ENCODE measurements at regions of chr12 and their contacts with region 1.

Region 1: DNA sequence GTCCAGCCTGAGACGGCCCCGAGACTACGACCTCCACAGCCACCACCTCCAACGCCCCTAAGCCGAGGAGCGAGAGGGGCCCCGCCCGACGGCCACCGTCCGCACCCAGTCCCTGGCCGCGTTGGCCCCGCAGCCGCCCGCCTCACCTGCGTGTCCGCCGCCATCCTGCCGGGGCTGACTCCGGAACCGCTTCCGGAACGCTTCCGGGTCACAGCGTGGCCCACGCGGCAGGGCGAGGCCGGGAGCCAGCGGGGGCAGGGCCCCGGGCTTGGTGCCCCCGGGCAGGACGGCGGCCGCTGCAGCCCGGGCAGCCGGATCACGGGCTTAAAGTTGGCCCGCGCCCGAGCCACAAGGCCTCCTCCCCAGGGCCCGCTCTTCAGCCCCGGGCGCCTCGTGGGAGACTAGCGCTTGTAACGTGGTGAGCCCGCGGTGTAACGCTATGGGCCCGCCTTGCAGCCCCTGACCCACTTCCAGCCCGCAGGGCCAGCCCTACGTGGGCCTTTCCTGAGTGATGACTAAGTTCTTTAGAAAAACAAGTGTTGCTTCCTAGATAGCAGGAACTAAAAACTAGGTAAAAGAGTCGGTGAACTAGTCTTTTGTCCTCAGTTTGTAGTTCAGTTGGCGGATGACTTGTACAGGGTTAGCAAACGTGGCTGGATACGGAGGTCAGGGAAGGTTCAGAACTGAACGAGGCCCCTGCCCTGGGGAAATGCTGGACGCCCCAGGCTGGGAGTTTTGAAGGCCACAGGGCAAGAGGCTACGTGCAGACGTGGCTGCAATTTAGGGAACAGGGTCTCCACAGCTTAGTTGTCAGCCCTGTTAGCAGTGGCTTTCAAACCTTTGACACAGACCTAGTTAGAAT is at the start of gene GCN1:
- DNase-seq: peak; percentile 85 to 88 (median 86)
- ATAC-seq: peak; percentile 79
- H3K4me3 ChIP-seq: peak within 1 kb of the TSS; percentile 98
- H3K27ac ChIP-seq: peak within 1 kb of the TSS; percentile 96
- H3K4me1 ChIP-seq: peaks cover 12 to 38% of the 10 kb centered on the region in 2 experiments; a peak in 4 of 5 replicates
- H3K27me3 ChIP-seq: no peaks in the 10 kb centered on the region
- CTCF ChIP-seq: no peak
- EP300 ChIP-seq: no peak
- POLR2A ChIP-seq: peak; percentile 77
- RAD21 ChIP-seq: no peak
- polyA plus RNA-seq, gene GCN1: 11.9 to 18.2 TPM

Region 2: DNA sequence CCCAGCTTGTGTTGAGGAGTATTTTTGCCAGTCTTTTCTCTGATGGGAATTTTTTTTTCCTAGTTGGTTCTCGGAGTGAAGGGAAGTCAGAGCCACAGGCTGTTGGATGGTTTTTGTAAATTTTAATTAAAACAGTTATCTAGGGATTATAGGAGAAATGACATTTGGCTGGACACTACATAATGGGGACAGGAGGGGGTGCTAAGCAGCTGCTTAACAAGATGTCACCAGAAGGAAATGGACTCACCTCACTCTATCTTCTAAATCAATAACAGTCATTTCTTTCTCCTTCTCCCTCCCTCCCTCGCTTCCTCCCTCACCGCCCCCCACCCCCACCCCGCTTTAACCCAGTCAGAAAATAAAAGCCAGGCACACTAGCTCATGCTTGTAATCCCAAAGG is 694.6 kb before region 1 on chr12:
- CTCF ChIA-PET with region 1: no interaction called
- POLR2A ChIA-PET with region 1: no interaction called
- in situ Hi-C with region 1: no loop called
- intact Hi-C with region 1: no loop called
- DNase-seq: peak in 2 of 4 experiments; percentile 8 to 16
- ATAC-seq: no peak
- H3K4me3 ChIP-seq: no peak overlapping the region
- H3K27ac ChIP-seq: no peak overlapping the region
- H3K4me1 ChIP-seq: no peaks in the 10 kb centered on the region
- H3K27me3 ChIP-seq: peaks cover 0 to 3% of the 10 kb centered on the region in 2 experiments; a peak in 1 of 5 replicates
- CTCF ChIP-seq: peak in 2 of 3 experiments; percentile 25 to 51; a peak in 4 of 6 replicates
- EP300 ChIP-seq: no peak
- POLR2A ChIP-seq: no peak
- RAD21 ChIP-seq: peak in 1 of 2 experiments; percentile 21; a peak in 1 of 4 replicates

Region 3: GRCh38 chr12:119956018-119956417 is 238.7 kb before region 1 on chr12:
- CTCF ChIA-PET with region 1: no interaction called
- POLR2A ChIA-PET with region 1: no interaction called
- in situ Hi-C with region 1: no loop called
- intact Hi-C with region 1: no loop called
- DNase-seq: peak in 1 of 4 experiments; percentile 11
- ATAC-seq: peak; percentile 40; the same call in 1 of the 3 replicates
- H3K4me3 ChIP-seq: no peak overlapping the region
- H3K27ac ChIP-seq: no peak overlapping the region
- H3K4me1 ChIP-seq: no peaks in the 10 kb centered on the region
- H3K27me3 ChIP-seq: no peaks in the 10 kb centered on the region; a peak in 2 of 5 replicates
- CTCF ChIP-seq: peak in 2 of 3 experiments; percentile 22 to 27; a peak in 1 of 6 replicates
- EP300 ChIP-seq: no peak
- POLR2A ChIP-seq: no peak
- RAD21 ChIP-seq: no peak

Region 4: GRCh38 chr12:120116792-120117651 is 77.7 kb before region 1 on chr12:
- CTCF ChIA-PET with region 1: no interaction called
- POLR2A ChIA-PET with region 1: interaction called, 54 read pairs
- in situ Hi-C with region 1: no loop called
- intact Hi-C with region 1: no loop called
- DNase-seq: peak; percentile 96 to 100 (median 99)
- ATAC-seq: peak; percentile 88
- H3K4me3 ChIP-seq: peak overlapping the region; percentile 75
- H3K27ac ChIP-seq: peak overlapping the region; percentile 71
- H3K4me1 ChIP-seq: peaks cover 15 to 26% of the 10 kb centered on the region in 2 experiments; a peak in 4 of 5 replicates
- H3K27me3 ChIP-seq: no peaks in the 10 kb centered on the region
- CTCF ChIP-seq: no peak
- EP300 ChIP-seq: no peak
- POLR2A ChIP-seq: peak; percentile 90
- RAD21 ChIP-seq: no peak

Region 5: DNA sequence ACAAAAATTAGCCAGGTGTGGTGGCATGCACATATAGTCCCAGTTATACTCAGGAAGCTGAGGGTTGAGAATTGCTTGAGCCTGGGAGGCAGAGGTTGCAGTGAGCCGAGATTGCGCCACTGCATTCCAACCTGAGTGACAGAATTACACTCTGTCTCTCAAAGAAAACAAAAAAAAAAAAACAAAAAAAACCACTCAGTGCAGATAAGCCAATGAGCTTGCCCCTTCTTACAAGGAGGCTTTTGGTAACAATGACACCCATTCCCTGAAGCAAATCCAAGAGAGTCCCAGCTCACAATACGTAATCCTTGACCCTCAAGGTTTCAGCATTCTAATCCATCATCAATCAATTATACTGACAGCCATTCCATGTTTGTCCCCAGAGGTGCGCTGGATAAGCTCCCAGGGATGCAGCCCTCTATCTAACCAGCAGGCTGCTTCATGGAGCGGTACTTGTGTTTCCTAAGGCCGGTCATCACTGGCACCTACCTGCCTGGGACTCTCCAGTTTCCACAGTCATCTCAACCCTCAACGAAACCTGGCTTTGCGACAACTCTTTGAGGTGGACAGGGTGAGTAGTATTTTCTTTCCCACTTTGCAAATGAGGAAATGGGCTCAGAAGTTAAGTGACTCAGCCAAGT is 12.7 kb before region 1 on chr12:
- CTCF ChIA-PET with region 1: no interaction called
- POLR2A ChIA-PET with region 1: interaction called, 106 read pairs
- in situ Hi-C with region 1: no loop called
- intact Hi-C with region 1: no loop called
- DNase-seq: no peak
- ATAC-seq: 0 out of 3 replicates have a peak, but pooled peaks have one; percentile 20
- H3K4me3 ChIP-seq: no peak overlapping the region
- H3K27ac ChIP-seq: no peak overlapping the region
- H3K4me1 ChIP-seq: no peaks in the 10 kb centered on the region
- H3K27me3 ChIP-seq: no peaks in the 10 kb centered on the region
- CTCF ChIP-seq: no peak
- EP300 ChIP-seq: no peak
- POLR2A ChIP-seq: no peak
- RAD21 ChIP-seq: no peak

Region 6: DNA sequence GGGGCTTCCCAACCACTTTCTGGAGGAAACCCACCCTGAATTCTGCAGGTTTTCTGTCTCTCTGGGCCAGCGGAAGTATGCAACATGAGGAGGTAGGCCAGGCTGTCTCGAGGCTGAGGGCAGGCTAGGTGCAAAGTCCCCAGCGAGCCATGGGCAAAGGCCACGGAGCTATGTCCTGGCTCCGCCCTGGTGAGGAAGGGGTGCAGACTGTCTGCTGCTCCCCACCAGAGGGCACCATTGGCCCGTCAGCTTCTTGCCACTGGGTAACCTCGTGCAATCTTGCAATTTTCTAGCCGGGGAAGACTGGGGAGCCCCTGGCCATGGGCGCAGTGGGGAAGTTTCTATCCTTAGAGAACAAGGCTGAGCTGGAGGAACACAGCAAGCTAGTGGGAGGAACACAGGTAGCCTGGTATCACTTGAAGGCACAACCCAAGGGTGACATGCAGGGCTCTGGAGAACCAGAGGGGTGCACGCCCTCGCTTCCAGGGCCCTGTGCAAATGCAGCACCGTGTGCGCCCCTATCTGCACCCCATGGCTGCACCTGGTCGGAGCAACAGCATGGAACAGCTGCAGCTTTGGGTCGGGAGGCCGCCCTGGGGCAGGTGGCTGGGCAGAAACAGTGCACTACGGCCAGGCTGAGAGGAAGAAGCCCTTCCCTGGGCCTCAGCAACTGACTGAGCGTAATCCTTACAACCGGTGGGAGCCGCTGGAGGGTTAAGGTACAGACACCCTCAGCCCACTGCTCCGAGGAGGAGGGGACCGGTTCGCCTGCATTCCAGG is 33.7 kb after region 1 on chr12:
- CTCF ChIA-PET with region 1: no interaction called
- POLR2A ChIA-PET with region 1: interaction called, 331 read pairs
- in situ Hi-C with region 1: no loop called
- intact Hi-C with region 1: no loop called
- DNase-seq: peak; percentile 86 to 92 (median 86)
- ATAC-seq: peak; percentile 78
- H3K4me3 ChIP-seq: peak overlapping the region; percentile 2; the same call in 1 of the 2 replicates
- H3K27ac ChIP-seq: peak overlapping the region; percentile 96; the same call in 2 of the 3 replicates
- H3K4me1 ChIP-seq: peaks cover 74 to 80% of the 10 kb centered on the region in 2 experiments
- H3K27me3 ChIP-seq: no peaks in the 10 kb centered on the region
- CTCF ChIP-seq: peak; percentile 95 to 96 (median 95)
- EP300 ChIP-seq: peak; percentile 38
- POLR2A ChIP-seq: no peak
- RAD21 ChIP-seq: peak; percentile 98 to 99

Region 7: GRCh38 chr12:120249875-120250795 is 55.4 kb after region 1 on chr12:
- CTCF ChIA-PET with region 1: no interaction called
- POLR2A ChIA-PET with region 1: interaction called, 24 read pairs
- in situ Hi-C with region 1: no loop called
- intact Hi-C with region 1: no loop called
- DNase-seq: no peak
- ATAC-seq: peak; percentile 16; the same call in 2 of the 3 replicates
- H3K4me3 ChIP-seq: no peak overlapping the region
- H3K27ac ChIP-seq: no peak overlapping the region
- H3K4me1 ChIP-seq: peaks cover 30 to 38% of the 10 kb centered on the region in 2 experiments
- H3K27me3 ChIP-seq: no peaks in the 10 kb centered on the region
- CTCF ChIP-seq: no peak
- EP300 ChIP-seq: no peak
- POLR2A ChIP-seq: no peak
- RAD21 ChIP-seq: no peak

Region 8: DNA sequence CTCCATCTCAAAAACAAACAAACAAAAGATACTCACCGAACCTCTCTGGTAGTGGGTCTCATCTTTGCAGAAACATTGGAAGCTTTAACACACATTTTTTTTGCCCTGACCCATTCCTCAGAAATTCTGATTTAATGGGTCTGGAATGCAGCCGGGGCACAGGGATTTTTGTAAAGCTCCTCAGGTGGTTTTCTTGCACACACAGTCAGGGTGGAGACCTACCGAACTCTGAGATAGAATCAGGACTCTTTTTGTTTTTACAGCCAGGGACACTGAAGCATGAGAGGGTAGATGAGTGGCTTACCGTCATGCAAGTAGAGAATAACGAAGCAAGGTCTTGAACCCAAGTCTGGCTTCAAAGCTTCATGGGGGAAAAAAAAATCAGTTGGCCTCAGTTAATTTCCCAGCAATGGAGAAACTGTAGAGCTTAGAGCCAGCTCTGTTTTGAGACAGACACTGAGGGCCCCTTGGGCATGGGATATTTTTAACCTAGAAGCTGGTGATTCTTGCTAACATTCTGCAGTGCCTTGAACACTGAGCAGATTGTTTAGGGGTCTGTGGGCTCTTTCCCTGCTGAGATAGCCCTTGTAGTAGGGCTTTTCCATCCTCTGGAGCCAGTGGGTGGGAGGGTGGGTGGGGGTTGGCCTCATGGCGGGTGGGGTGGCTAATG is 92.2 kb after region 1 on chr12:
- CTCF ChIA-PET with region 1: no interaction called
- POLR2A ChIA-PET with region 1: interaction called, 217 read pairs
- in situ Hi-C with region 1: no loop called
- intact Hi-C with region 1: no loop called
- DNase-seq: no peak
- ATAC-seq: no peak
- H3K4me3 ChIP-seq: no peak overlapping the region
- H3K27ac ChIP-seq: no peak overlapping the region
- H3K4me1 ChIP-seq: peaks cover 5 to 26% of the 10 kb centered on the region in 2 experiments; a peak in 3 of 5 replicates
- H3K27me3 ChIP-seq: no peaks in the 10 kb centered on the region
- CTCF ChIP-seq: no peak
- EP300 ChIP-seq: no peak
- POLR2A ChIP-seq: no peak
- RAD21 ChIP-seq: no peak